ENCODE measurements at regions of chr11 and their contacts with region 1.

Region 1: DNA sequence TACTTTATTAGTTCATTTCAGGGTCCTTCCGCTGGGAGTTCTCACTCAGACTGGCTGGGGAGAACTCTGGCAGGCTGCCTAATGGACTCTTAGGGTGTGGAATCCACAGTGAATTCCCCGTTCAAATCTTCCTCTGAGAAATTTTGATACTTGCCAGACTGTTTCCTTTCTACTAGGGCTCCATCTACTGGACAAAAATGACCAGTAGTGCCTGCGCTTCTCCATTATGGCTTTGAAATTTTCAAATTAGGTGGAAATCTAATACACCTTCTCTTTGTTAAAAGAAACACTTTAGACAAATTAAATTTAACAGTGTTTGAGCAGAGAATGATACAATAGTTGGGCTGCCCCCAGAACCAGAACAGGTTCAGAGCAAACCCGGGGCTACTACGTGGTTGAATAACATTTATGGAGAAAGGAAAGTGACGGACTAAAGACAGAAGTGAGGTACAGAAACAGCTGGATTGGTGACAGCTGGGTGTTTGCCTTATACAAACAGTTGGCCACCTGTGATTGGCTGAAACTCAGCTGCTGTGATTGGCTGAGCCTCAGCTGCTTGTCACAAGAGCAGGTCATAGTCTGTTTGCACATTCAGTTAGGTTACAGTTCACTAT is 52.9 kb upstream of the FDX1 start:
- DNase-seq: peak in 5 of 14 experiments; percentile 3 to 70 (median 54)
- ATAC-seq: peak; percentile 57
- H3K4me3 ChIP-seq: no peak overlapping the region
- H3K4me3 Mint-ChIP-seq: no peak overlapping the region
- H3K27ac ChIP-seq: no peak overlapping the region
- H3K27ac Mint-ChIP-seq: no peak overlapping the region
- H3K4me1 ChIP-seq: no peaks in the 10 kb centered on the region
- H3K4me1 Mint-ChIP-seq: peaks cover 6% of the 10 kb centered on the region
- H3K27me3 ChIP-seq: no peaks in the 10 kb centered on the region
- H3K27me3 Mint-ChIP-seq: no peaks in the 10 kb centered on the region
- CTCF ChIP-seq: peak; percentile 77

Region 2: DNA sequence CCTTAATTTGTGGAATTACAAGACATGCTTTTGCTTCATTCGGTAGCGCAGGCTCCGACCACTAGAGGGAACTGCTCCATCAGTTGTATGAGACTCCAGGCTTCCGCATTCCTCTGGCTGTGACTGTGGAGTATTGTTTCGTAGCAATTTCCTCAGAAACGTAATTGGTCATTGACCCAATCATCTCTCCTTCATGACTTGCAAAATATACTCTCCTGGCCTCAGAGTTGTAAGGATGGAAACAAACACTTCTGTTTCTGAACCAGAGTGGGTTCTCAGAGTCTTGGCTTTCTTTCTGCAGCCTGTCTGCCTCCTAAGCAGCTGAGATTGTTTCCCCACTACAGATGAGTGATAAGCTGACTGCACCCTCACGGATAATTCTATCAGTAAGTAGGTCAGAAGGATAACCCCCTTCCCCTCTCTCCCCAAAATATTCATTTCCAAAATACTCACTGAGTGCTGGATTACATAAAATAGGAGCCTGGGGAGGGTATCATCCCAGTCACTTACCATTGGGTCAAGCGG is 430.4 kb before region 1 on chr11:
- CTCF ChIA-PET with region 1: no interaction called
- POLR2A ChIA-PET with region 1: no interaction called
- intact Hi-C with region 1: no loop called
- DNase-seq: peak in 10 of 14 experiments; percentile 5 to 70 (median 29)
- ATAC-seq: peak; percentile 76
- H3K4me3 ChIP-seq: no peak overlapping the region
- H3K4me3 Mint-ChIP-seq: peak overlapping the region; percentile 20
- H3K27ac ChIP-seq: no peak overlapping the region
- H3K27ac Mint-ChIP-seq: no peak overlapping the region
- H3K4me1 ChIP-seq: peaks cover 2% of the 10 kb centered on the region
- H3K4me1 Mint-ChIP-seq: peaks cover 6% of the 10 kb centered on the region
- H3K27me3 ChIP-seq: no peaks in the 10 kb centered on the region
- H3K27me3 Mint-ChIP-seq: peaks cover 3% of the 10 kb centered on the region
- CTCF ChIP-seq: peak; percentile 62

Region 3: GRCh38 chr11:110251837-110252236 is 125.0 kb before region 1 on chr11:
- CTCF ChIA-PET with region 1: no interaction called
- POLR2A ChIA-PET with region 1: no interaction called
- intact Hi-C with region 1: loop called in 1 of 2 experiments (anchors 5 kb)
- DNase-seq: no peak
- ATAC-seq: no peak
- H3K4me3 ChIP-seq: no peak overlapping the region
- H3K4me3 Mint-ChIP-seq: no peak overlapping the region
- H3K27ac ChIP-seq: no peak overlapping the region
- H3K27ac Mint-ChIP-seq: no peak overlapping the region
- H3K4me1 ChIP-seq: no peaks in the 10 kb centered on the region
- H3K4me1 Mint-ChIP-seq: no peaks in the 10 kb centered on the region
- H3K27me3 ChIP-seq: no peaks in the 10 kb centered on the region
- H3K27me3 Mint-ChIP-seq: no peaks in the 10 kb centered on the region
- CTCF ChIP-seq: no peak

Region 4: GRCh38 chr11:110392056-110392455 is 15.2 kb after region 1 on chr11:
- CTCF ChIA-PET with region 1: no interaction called
- POLR2A ChIA-PET with region 1: no interaction called
- intact Hi-C with region 1: no loop called
- DNase-seq: no peak
- ATAC-seq: no peak
- H3K4me3 ChIP-seq: no peak overlapping the region
- H3K4me3 Mint-ChIP-seq: no peak overlapping the region
- H3K27ac ChIP-seq: no peak overlapping the region
- H3K27ac Mint-ChIP-seq: no peak overlapping the region
- H3K4me1 ChIP-seq: peaks cover 11% of the 10 kb centered on the region
- H3K4me1 Mint-ChIP-seq: peaks cover 11% of the 10 kb centered on the region
- H3K27me3 ChIP-seq: no peaks in the 10 kb centered on the region
- H3K27me3 Mint-ChIP-seq: peaks cover 14% of the 10 kb centered on the region
- CTCF ChIP-seq: no peak

Measured in CD4-positive, alpha-beta T cell (primary cell).